ENCODE measurements at regions of chr17 and their contacts with region 1.

Region 1: GRCh38 chr17:49677933-49678847 is at the start of gene SPOP:
- DNase-seq: peak; percentile 100
- ATAC-seq: peak; percentile 96
- H3K4me3 Mint-ChIP-seq: peak within 1 kb of the TSS; percentile 95
- H3K27ac Mint-ChIP-seq: peak within 1 kb of the TSS; percentile 96
- H3K4me1 Mint-ChIP-seq: peaks cover 39% of the 10 kb centered on the region
- H3K27me3 Mint-ChIP-seq: no peaks in the 10 kb centered on the region
- total RNA-seq, gene SPOP: 57.0 to 64.6 TPM

Region 2: GRCh38 chr17:48908047-48908843 is 769.9 kb before region 1 on chr17 and contains the start of gene UBE2Z:
- CTCF ChIA-PET with region 1: no interaction called
- POLR2A ChIA-PET with region 1: no interaction called
- intact Hi-C with region 1: loop called in 1 of 2 experiments (anchors 2 kb)
- DNase-seq: peak; percentile 94
- ATAC-seq: peak; percentile 86
- H3K4me3 Mint-ChIP-seq: peak within 1 kb of the TSS; percentile 89
- H3K27ac Mint-ChIP-seq: peak within 1 kb of the TSS; percentile 97
- H3K4me1 Mint-ChIP-seq: peaks cover 46% of the 10 kb centered on the region
- H3K27me3 Mint-ChIP-seq: no peaks in the 10 kb centered on the region
- total RNA-seq, gene UBE2Z: 104 TPM

Region 3: GRCh38 chr17:49361902-49362722 is 316.1 kb before region 1 on chr17 and contains the start of gene ZNF652:
- CTCF ChIA-PET with region 1: no interaction called
- POLR2A ChIA-PET with region 1: no interaction called
- intact Hi-C with region 1: loop called in 1 of 2 experiments (anchors 2 kb)
- DNase-seq: peak; percentile 93
- ATAC-seq: peak; percentile 57
- H3K4me3 Mint-ChIP-seq: peak within 1 kb of the TSS; percentile 92
- H3K27ac Mint-ChIP-seq: peak within 1 kb of the TSS; percentile 92
- H3K4me1 Mint-ChIP-seq: peaks cover 50% of the 10 kb centered on the region
- H3K27me3 Mint-ChIP-seq: peaks cover 1% of the 10 kb centered on the region
- total RNA-seq, gene ZNF652: 5.2 to 7.0 TPM

Region 4: GRCh38 chr17:49508061-49508865 is 169.9 kb before region 1 on chr17:
- CTCF ChIA-PET with region 1: no interaction called
- POLR2A ChIA-PET with region 1: no interaction called
- intact Hi-C with region 1: no loop called
- DNase-seq: no peak
- ATAC-seq: no peak
- H3K4me3 Mint-ChIP-seq: no peak overlapping the region
- H3K27ac Mint-ChIP-seq: no peak overlapping the region
- H3K4me1 Mint-ChIP-seq: no peaks in the 10 kb centered on the region
- H3K27me3 Mint-ChIP-seq: peaks cover 31% of the 10 kb centered on the region

Region 5: DNA sequence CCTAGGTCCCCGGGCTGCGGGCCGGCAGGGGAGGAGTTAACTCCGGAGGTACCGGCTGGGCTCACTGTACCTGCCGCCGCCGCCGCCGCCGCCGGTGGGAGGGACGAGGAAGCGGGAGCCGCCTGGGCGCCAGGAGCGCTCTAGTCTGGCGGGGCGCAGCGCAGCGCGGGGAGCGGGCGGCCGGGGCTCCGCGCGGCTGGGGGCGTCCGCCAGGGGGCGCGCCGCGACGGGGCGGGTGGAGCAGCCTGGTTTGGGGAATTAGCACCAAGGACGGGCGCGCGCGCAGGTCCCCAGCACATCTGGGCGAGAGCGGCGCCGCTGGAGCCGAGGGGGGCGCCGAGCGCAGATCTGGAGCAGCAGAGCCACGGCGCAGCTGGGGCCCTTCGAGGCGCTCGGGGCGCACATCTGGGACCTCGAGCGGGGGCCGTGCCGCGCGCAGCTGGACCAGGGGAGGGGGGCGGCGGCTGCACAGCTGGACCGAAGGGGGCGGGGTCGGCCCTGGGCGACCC is 102.6 kb before region 1 on chr17 and contains the start of gene NXPH3:
- CTCF ChIA-PET with region 1: interaction called, 3 read pairs
- POLR2A ChIA-PET with region 1: interaction called, 3 read pairs
- intact Hi-C with region 1: loop called in 1 of 2 experiments (anchors 1 kb)
- DNase-seq: peak; percentile 86
- ATAC-seq: peak; percentile 87
- H3K4me3 Mint-ChIP-seq: peak within 1 kb of the TSS; percentile 61
- H3K27ac Mint-ChIP-seq: no peak within 1 kb of the TSS
- H3K4me1 Mint-ChIP-seq: peaks cover 3% of the 10 kb centered on the region
- H3K27me3 Mint-ChIP-seq: peaks cover 40% of the 10 kb centered on the region
- total RNA-seq, gene NXPH3: 0.09 TPM

Region 6: DNA sequence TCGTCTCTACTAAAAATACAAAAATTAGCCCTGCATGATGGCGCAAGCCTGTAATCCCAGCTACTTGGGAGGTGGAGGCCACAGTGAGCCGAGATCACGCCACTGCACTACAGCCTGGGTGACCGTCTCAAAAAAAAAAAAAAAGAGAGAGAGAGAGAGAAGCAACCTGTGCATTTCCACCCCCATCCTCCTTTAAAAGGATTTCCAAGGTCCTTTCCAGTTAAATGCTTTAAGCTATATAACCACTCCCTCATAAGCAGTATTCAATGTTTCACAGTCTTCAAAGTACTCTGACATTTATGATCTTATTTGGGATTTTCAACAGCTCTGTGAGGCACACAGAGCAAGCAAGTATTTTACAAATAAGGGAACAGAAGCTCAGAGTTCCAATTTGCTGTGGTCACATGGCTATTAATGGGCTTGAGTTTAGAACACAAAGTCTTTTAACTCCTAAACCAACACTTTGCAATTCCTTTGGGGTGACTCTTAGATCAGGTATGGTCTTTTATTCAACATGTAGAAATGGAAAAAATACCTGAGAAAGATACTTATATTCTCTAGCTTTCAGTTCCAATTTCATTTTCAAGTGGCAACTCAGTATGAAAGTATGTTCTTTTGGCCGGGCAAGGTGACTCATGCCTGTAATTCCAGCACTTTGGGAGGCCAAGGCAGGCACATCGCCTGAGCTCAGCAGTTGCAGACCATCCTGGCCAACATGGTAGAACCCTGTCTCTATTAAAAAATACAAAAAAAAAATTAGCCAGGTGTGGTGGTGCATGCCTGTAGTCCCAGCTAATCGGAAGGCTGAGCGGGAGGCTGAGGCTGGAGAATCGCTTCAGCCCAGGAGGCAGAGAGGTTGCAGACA is 31.6 kb before region 1 on chr17:
- CTCF ChIA-PET with region 1: interaction called, 4 read pairs
- POLR2A ChIA-PET with region 1: interaction called, 7 read pairs
- intact Hi-C with region 1: loop called (anchors 1 to 2 kb)
- DNase-seq: peak; percentile 78
- ATAC-seq: peak; percentile 91
- H3K4me3 Mint-ChIP-seq: peak overlapping the region; percentile 32
- H3K27ac Mint-ChIP-seq: peak overlapping the region; percentile 84
- H3K4me1 Mint-ChIP-seq: peaks cover 63% of the 10 kb centered on the region
- H3K27me3 Mint-ChIP-seq: no peaks in the 10 kb centered on the region

Region 7: GRCh38 chr17:49763735-49764558 is 85.8 kb after region 1 on chr17 and contains the start of gene FAM117A:
- CTCF ChIA-PET with region 1: interaction called, 3 read pairs
- POLR2A ChIA-PET with region 1: no interaction called
- intact Hi-C with region 1: loop called in 1 of 2 experiments (anchors 1 kb)
- DNase-seq: peak; percentile 98
- ATAC-seq: peak; percentile 97
- H3K4me3 Mint-ChIP-seq: peak within 1 kb of the TSS; percentile 89
- H3K27ac Mint-ChIP-seq: peak within 1 kb of the TSS; percentile 88
- H3K4me1 Mint-ChIP-seq: peaks cover 52% of the 10 kb centered on the region
- H3K27me3 Mint-ChIP-seq: no peaks in the 10 kb centered on the region
- total RNA-seq, gene FAM117A: 14.1 to 15.4 TPM

Region 8: GRCh38 chr17:50151041-50151936 is 473.1 kb after region 1 on chr17:
- CTCF ChIA-PET with region 1: no interaction called
- POLR2A ChIA-PET with region 1: no interaction called
- intact Hi-C with region 1: loop called in 1 of 2 experiments (anchors 5 kb)
- DNase-seq: peak; percentile 95
- ATAC-seq: peak; percentile 66
- H3K4me3 Mint-ChIP-seq: peak overlapping the region; percentile 90
- H3K27ac Mint-ChIP-seq: peak overlapping the region; percentile 96
- H3K4me1 Mint-ChIP-seq: peaks cover 40% of the 10 kb centered on the region
- H3K27me3 Mint-ChIP-seq: no peaks in the 10 kb centered on the region